CD4-positive, alpha-beta memory T cell (primary cell): ENCODE measurements at regions of chr9 and their contacts with region 1.

Region 1: GRCh38 chr9:121340676-121341392 is 29.2 kb downstream of the STOM start:
- DNase-seq: no peak
- H3K4me3 ChIP-seq: no peak overlapping the region
- H3K4me3 Mint-ChIP-seq: no peak overlapping the region
- H3K27ac ChIP-seq: no peak overlapping the region
- H3K27ac Mint-ChIP-seq: peak overlapping the region in 2 of 7 donors; percentile 39 to 66
- H3K4me1 ChIP-seq: no peaks in the 10 kb centered on the region
- H3K4me1 Mint-ChIP-seq: peaks cover 8 to 25% (median 18%) of the 10 kb centered on the region in 4 donors
- H3K27me3 ChIP-seq: no peaks in the 10 kb centered on the region
- H3K27me3 Mint-ChIP-seq: no peaks in the 10 kb centered on the region

Region 2: GRCh38 chr9:121369595-121370265 is 28.9 kb after region 1 on chr9 and contains the start of gene STOM:
- CTCF ChIA-PET with region 1: no interaction called
- POLR2A ChIA-PET with region 1: interaction called, 14 read pairs
- intact Hi-C with region 1: no loop called
- DNase-seq: peak in 4 of 5 donors; percentile 75 to 86 (median 78)
- H3K4me3 ChIP-seq: peak within 1 kb of the TSS; percentile 72 to 80
- H3K4me3 Mint-ChIP-seq: peak within 1 kb of the TSS; percentile 89 to 98 (median 96)
- H3K27ac ChIP-seq: peak within 1 kb of the TSS; percentile 79
- H3K27ac Mint-ChIP-seq: peak within 1 kb of the TSS; percentile 78 to 99 (median 96)
- H3K4me1 ChIP-seq: peaks cover 50% of the 10 kb centered on the region
- H3K4me1 Mint-ChIP-seq: peaks cover 38 to 74% (median 50%) of the 10 kb centered on the region in 4 donors
- H3K27me3 ChIP-seq: no peaks in the 10 kb centered on the region
- H3K27me3 Mint-ChIP-seq: no peaks in the 10 kb centered on the region
- total RNA-seq, gene STOM: 81.2 to 82.8 TPM